ENCODE measurements at regions of chr6 and their contacts with region 1.

Region 1: GRCh38 chr6:7910654-7911344 is at the start of gene TXNDC5:
- DNase-seq: peak; percentile 35 to 82 (median 55)
- ATAC-seq: peak; percentile 91
- H3K4me3 ChIP-seq: peak within 1 kb of the TSS; percentile 76
- H3K4me3 Mint-ChIP-seq: peak within 1 kb of the TSS in 9 of 10 donors; percentile 68 to 89 (median 78)
- H3K27ac ChIP-seq: peak within 1 kb of the TSS; percentile 46
- H3K27ac Mint-ChIP-seq: peak within 1 kb of the TSS in 5 of 9 donors; percentile 3 to 76 (median 27)
- H3K4me1 ChIP-seq: peaks cover 6 to 16% of the 10 kb centered on the region in 2 donors
- H3K4me1 Mint-ChIP-seq: peaks cover 4 to 18% (median 6%) of the 10 kb centered on the region in 7 donors
- H3K27me3 ChIP-seq: no peaks in the 10 kb centered on the region
- H3K27me3 Mint-ChIP-seq: no peaks in the 10 kb centered on the region
- total RNA-seq, gene TXNDC5: 11.5 to 48.6 (median 34.8) TPM

Region 2: GRCh38 chr6:7312616-7313504 is 597.9 kb before region 1 on chr6 and contains the start of gene SSR1:
- CTCF ChIA-PET with region 1: no interaction called
- POLR2A ChIA-PET with region 1: no interaction called
- intact Hi-C with region 1: loop called in 1 of 2 experiments (anchors 5 kb)
- DNase-seq: peak; percentile 76 to 97 (median 84)
- ATAC-seq: peak; percentile 99
- H3K4me3 ChIP-seq: peak within 1 kb of the TSS; percentile 66
- H3K4me3 Mint-ChIP-seq: peak within 1 kb of the TSS; percentile 83 to 99 (median 94)
- H3K27ac ChIP-seq: peak within 1 kb of the TSS; percentile 76
- H3K27ac Mint-ChIP-seq: peak within 1 kb of the TSS; percentile 87 to 93 (median 92)
- H3K4me1 ChIP-seq: peaks cover 6 to 27% of the 10 kb centered on the region in 2 donors
- H3K4me1 Mint-ChIP-seq: peaks cover 31 to 65% (median 50%) of the 10 kb centered on the region in 7 donors
- H3K27me3 ChIP-seq: no peaks in the 10 kb centered on the region
- H3K27me3 Mint-ChIP-seq: no peaks in the 10 kb centered on the region
- total RNA-seq, gene SSR1: 75.0 to 178 (median 127) TPM

Region 3: DNA sequence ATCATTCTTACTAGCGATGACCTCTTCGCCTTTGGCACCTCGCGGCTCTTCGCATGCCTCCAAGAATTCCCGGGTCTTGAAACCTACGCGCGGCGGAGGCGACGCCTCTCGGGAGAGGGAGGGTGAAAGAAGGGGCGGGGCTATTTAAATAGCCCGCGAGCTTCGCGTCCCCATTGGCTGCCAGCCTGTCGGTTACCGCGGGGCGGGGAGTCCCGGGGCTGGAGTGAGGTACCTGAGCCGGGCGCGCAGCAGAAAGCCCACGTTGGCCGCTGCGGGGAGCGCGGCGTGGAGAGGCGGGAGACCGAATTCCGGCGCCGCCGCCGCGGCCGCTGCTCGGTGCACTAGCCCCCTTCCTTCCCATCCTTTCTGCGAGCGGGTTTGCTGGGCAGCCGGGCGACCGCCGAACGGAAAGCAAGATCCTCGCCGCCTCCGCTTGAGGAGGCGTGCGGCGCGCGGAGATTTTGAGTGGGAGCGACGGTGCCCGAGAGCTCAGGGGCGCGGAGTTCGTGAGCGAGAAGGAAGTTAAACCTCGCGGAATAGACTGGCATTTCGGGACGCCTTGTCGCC is 184.9 kb before region 1 on chr6 and contains the start of gene BMP6:
- CTCF ChIA-PET with region 1: no interaction called
- POLR2A ChIA-PET with region 1: no interaction called
- intact Hi-C with region 1: loop called in 1 of 2 experiments (anchors 1 kb)
- DNase-seq: peak in 7 of 9 donors; percentile 10 to 73 (median 24)
- ATAC-seq: peak; percentile 79
- H3K4me3 ChIP-seq: peak within 1 kb of the TSS; percentile 20
- H3K4me3 Mint-ChIP-seq: peak within 1 kb of the TSS; percentile 58 to 90 (median 79)
- H3K27ac ChIP-seq: no peak within 1 kb of the TSS
- H3K27ac Mint-ChIP-seq: no peak within 1 kb of the TSS
- H3K4me1 ChIP-seq: peaks cover 0 to 7% of the 10 kb centered on the region in 2 donors
- H3K4me1 Mint-ChIP-seq: peaks cover 13 to 24% (median 22%) of the 10 kb centered on the region in 7 donors
- H3K27me3 ChIP-seq: peaks cover 8 to 20% of the 10 kb centered on the region in 2 donors
- H3K27me3 Mint-ChIP-seq: peaks cover 61 to 78% (median 62%) of the 10 kb centered on the region in 5 donors
- total RNA-seq, gene BMP6: 0.37 to 0.56 TPM in 2 of 5 experiments, not detected in the others

Region 4: GRCh38 chr6:7878401-7878964 is 32.3 kb before region 1 on chr6:
- CTCF ChIA-PET with region 1: no interaction called
- POLR2A ChIA-PET with region 1: no interaction called
- intact Hi-C with region 1: no loop called
- DNase-seq: no peak
- ATAC-seq: no peak
- H3K4me3 ChIP-seq: no peak overlapping the region
- H3K4me3 Mint-ChIP-seq: no peak overlapping the region
- H3K27ac ChIP-seq: no peak overlapping the region
- H3K27ac Mint-ChIP-seq: no peak overlapping the region
- H3K4me1 ChIP-seq: no peaks in the 10 kb centered on the region
- H3K4me1 Mint-ChIP-seq: no peaks in the 10 kb centered on the region
- H3K27me3 ChIP-seq: no peaks in the 10 kb centered on the region
- H3K27me3 Mint-ChIP-seq: no peaks in the 10 kb centered on the region

Region 5: DNA sequence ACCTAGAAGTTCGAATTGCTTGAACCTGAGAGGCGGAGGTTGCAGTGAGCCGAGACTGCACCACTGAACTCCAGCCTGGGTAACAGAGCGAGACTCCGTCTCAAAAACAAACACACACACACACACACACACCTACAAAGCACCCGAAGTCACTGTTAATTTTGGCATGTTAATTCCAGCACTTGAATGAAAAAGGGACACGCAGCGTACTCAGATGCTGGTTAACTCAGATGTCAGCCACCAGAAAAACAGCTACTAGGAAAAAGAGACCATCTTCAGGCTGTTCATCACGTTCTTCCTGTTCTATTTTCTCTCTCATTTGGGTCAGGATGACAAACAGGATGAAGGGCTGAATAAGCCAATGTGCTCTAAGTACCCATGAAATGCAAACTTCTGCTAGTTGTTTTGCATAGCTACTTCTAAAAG is 106.5 kb after region 1 on chr6:
- CTCF ChIA-PET with region 1: no interaction called
- POLR2A ChIA-PET with region 1: no interaction called
- intact Hi-C with region 1: loop called in 1 of 2 experiments (anchors 1 kb)
- DNase-seq: peak in 1 of 9 donors; percentile 46
- ATAC-seq: peak; percentile 74
- H3K4me3 ChIP-seq: no peak overlapping the region
- H3K4me3 Mint-ChIP-seq: peak overlapping the region in 4 of 10 donors; percentile 71 to 95 (median 90)
- H3K27ac ChIP-seq: peak overlapping the region; percentile 64
- H3K27ac Mint-ChIP-seq: peak overlapping the region in 5 of 9 donors; percentile 24 to 98 (median 92)
- H3K4me1 ChIP-seq: no peaks in the 10 kb centered on the region
- H3K4me1 Mint-ChIP-seq: peaks cover 0 to 20% (median 5%) of the 10 kb centered on the region in 7 donors
- H3K27me3 ChIP-seq: no peaks in the 10 kb centered on the region
- H3K27me3 Mint-ChIP-seq: no peaks in the 10 kb centered on the region

Region 6: DNA sequence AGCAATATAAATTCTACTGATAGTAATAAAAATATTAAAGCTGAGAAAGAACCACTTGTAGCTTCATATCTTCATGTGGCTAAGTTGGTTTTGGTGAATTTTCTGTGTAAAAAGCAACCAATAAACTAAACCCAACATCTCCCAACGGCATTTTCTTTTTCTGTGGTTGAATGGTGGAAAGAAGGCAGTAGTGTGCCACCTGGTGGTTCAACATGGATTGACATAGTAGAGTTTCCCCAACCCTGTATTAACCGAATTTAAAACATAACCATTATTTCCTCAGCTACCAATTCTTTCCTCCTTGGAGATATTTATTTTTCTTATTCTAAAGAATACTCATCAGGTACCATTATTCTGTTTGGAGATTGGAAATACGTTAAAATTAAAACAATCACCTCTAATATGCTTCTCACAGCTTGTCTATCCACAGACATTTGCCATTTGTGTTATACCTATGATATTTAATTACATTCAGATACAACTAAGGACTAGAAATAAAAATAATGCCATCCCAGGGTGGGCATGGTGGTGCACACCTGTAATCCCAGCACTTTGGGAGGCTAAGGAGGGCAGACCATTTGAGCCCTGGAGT is 308.6 kb after region 1 on chr6:
- CTCF ChIA-PET with region 1: no interaction called
- POLR2A ChIA-PET with region 1: no interaction called
- intact Hi-C with region 1: loop called in 1 of 2 experiments (anchors 2 kb)
- DNase-seq: peak in 7 of 9 donors; percentile 4 to 53 (median 32)
- ATAC-seq: peak; percentile 75
- H3K4me3 ChIP-seq: no peak overlapping the region
- H3K4me3 Mint-ChIP-seq: no peak overlapping the region
- H3K27ac ChIP-seq: no peak overlapping the region
- H3K27ac Mint-ChIP-seq: no peak overlapping the region
- H3K4me1 ChIP-seq: no peaks in the 10 kb centered on the region
- H3K4me1 Mint-ChIP-seq: no peaks in the 10 kb centered on the region
- H3K27me3 ChIP-seq: no peaks in the 10 kb centered on the region
- H3K27me3 Mint-ChIP-seq: peaks cover 5 to 19% (median 9%) of the 10 kb centered on the region in 5 donors

Measured in naive thymus-derived CD4-positive, alpha-beta T cell (primary cell).